CD4-positive, alpha-beta T cell (primary cell): ENCODE measurements at regions of chr14 and their contacts with region 1.

Region 1: GRCh38 chr14:100067971-100068959 is 3.0 kb downstream of the EVL start:
- DNase-seq: peak; percentile 68 to 97 (median 82)
- ATAC-seq: peak; percentile 49
- H3K4me3 ChIP-seq: peak overlapping the region; percentile 77
- H3K4me3 Mint-ChIP-seq: peak overlapping the region; percentile 95
- H3K27ac ChIP-seq: peak overlapping the region; percentile 82 to 96
- H3K27ac Mint-ChIP-seq: peak overlapping the region; percentile 98
- H3K4me1 ChIP-seq: peaks cover 67% of the 10 kb centered on the region
- H3K4me1 Mint-ChIP-seq: peaks cover 85% of the 10 kb centered on the region
- H3K27me3 ChIP-seq: no peaks in the 10 kb centered on the region
- H3K27me3 Mint-ChIP-seq: no peaks in the 10 kb centered on the region
- CTCF ChIP-seq: no peak

Region 2: DNA sequence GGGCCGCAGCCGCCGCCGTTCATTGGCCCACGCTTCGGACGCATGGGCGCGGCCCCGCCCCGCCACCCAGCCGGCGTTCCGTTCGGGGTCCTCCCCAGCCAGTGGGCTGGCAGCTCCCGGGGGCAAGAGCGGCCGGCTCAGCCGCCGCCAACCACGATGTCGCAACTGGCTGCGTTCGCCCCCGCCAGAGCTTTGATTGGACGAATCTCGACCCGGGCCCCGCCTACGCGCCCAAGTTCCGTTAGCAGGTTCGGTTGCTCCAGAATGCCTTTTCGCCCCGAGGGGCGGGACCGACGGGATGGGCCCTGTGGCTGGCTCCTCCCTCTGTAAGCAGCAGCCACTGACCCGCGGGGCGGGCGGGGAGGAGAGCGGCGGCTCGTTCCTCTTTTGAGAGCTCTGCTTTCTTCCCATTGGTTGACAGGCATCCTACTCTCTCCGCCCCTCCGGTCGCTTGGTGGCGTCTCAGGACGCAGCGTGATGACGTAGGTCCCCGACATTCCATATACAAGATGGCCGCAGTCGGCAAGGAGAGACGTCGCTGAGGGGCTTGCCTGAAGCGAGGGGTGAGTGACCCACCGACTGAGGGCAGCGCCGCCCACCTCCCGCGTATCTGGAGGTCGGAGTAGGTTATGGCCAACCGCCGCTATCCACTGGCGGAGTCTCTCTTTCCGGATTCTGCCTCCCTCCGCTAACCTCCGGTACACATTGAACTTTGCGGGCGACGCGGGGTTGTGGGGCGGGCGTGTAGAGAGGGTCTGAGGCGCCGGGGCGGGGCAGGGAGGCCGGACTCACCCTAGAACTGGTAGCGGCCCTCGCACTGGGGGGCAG is 587.1 kb before region 1 on chr14 and contains the start of gene CCNK:
- CTCF ChIA-PET with region 1: no interaction called
- POLR2A ChIA-PET with region 1: interaction called, 12 read pairs
- intact Hi-C with region 1: no loop called
- DNase-seq: peak; percentile 100
- ATAC-seq: peak; percentile 87
- H3K4me3 ChIP-seq: peak within 1 kb of the TSS; percentile 96
- H3K4me3 Mint-ChIP-seq: peak within 1 kb of the TSS; percentile 92
- H3K27ac ChIP-seq: peak within 1 kb of the TSS; percentile 90 to 96
- H3K27ac Mint-ChIP-seq: peak within 1 kb of the TSS; percentile 94
- H3K4me1 ChIP-seq: peaks cover 29% of the 10 kb centered on the region
- H3K4me1 Mint-ChIP-seq: peaks cover 74% of the 10 kb centered on the region
- H3K27me3 ChIP-seq: no peaks in the 10 kb centered on the region
- H3K27me3 Mint-ChIP-seq: no peaks in the 10 kb centered on the region
- CTCF ChIP-seq: no peak
- total RNA-seq, gene CCNK: 140 to 151 TPM

Region 3: DNA sequence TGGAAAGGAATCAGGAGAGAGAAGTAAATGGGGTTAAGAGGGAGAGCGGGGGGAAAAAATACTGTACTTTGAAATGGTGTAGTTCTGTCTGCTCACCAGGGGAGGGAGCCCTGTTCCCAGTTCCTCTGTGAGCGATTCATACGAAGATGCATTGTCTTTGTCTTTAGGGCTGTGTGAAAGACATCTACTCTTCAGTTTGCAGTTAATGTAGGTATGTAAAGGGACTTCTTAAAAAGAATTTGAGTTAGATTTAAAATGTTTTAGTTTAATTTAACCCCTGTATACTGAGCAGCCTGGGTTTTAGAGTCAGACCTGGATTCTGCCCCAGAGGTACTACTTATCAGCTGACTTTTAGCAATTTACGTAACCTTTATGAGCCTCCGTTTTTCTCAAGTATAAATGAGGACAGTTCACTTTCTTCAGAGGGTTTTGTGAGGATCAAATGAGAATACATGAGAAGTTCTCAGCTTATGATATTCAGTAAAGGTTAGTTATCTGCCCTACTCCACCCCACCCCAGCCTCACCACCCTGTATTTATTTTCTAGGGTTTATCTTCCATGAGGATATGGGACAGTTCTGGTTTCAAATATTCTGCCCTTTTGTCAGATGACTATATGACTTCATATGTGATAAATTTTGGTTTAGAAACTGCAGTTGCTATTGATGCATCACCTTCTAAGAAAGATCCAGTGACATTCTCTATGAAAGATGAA is 85.6 kb before region 1 on chr14:
- CTCF ChIA-PET with region 1: interaction called, 6 read pairs
- POLR2A ChIA-PET with region 1: interaction called, 4 read pairs
- intact Hi-C with region 1: loop called in 1 of 2 experiments (anchors 2 kb)
- DNase-seq: peak; percentile 33 to 86 (median 60)
- ATAC-seq: peak; percentile 100
- H3K4me3 ChIP-seq: no peak overlapping the region
- H3K4me3 Mint-ChIP-seq: no peak overlapping the region
- H3K27ac ChIP-seq: no peak overlapping the region
- H3K27ac Mint-ChIP-seq: peak overlapping the region; percentile 34
- H3K4me1 ChIP-seq: peaks cover 3% of the 10 kb centered on the region
- H3K4me1 Mint-ChIP-seq: peaks cover 23% of the 10 kb centered on the region
- H3K27me3 ChIP-seq: no peaks in the 10 kb centered on the region
- H3K27me3 Mint-ChIP-seq: no peaks in the 10 kb centered on the region
- CTCF ChIP-seq: peak; percentile 95

Region 4: GRCh38 chr14:100056964-100057795 is 11.1 kb before region 1 on chr14:
- CTCF ChIA-PET with region 1: interaction called, 28 read pairs
- POLR2A ChIA-PET with region 1: interaction called, 1,638 read pairs
- intact Hi-C with region 1: loop called (anchors 1 kb)
- DNase-seq: peak in 4 of 14 experiments; percentile 48 to 85 (median 78)
- ATAC-seq: peak; percentile 80
- H3K4me3 ChIP-seq: no peak overlapping the region
- H3K4me3 Mint-ChIP-seq: peak overlapping the region; percentile 8
- H3K27ac ChIP-seq: peak overlapping the region in 1 of 2 donors; percentile 39
- H3K27ac Mint-ChIP-seq: peak overlapping the region; percentile 78
- H3K4me1 ChIP-seq: peaks cover 48% of the 10 kb centered on the region
- H3K4me1 Mint-ChIP-seq: peaks cover 51% of the 10 kb centered on the region
- H3K27me3 ChIP-seq: no peaks in the 10 kb centered on the region
- H3K27me3 Mint-ChIP-seq: no peaks in the 10 kb centered on the region
- CTCF ChIP-seq: peak; percentile 81

Region 5: DNA sequence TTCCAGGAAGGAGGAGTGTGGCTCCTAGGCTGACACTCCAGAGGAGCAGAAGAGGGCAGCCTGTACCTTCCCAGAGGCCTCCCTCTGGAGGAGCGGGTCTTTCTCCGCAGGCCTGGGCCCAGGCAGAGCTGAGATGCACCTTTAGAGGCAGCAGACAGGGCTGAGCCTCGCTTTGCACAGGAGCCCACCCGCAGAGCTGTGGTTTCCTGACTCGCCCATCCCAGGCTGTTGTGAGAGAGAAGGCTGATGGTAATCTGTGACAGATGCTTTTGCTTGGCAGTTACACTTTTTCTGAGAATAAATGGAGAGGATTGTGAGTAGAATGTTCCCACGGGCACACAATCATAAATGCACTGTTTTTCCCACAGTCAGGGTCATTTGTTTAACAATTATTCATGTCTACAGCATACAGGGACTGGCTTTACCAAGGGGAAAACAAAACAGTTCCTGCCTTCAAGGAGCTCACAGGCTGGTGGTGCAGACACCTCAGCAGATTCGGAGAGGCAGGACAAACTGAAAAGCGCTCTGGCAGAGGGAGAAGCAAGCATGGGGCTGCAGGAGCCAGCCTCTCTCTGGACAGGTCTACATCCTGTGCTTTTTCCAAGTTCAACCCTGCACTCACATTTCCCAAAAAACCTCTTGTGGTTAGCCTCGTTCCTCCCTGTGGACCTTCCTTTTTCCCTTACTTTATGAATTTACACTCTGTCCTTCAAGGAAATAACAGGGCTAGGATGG is 10.9 kb after region 1 on chr14:
- CTCF ChIA-PET with region 1: interaction called, 1,090 read pairs
- POLR2A ChIA-PET with region 1: interaction called, 1,638 read pairs
- intact Hi-C with region 1: loop called (anchors 1 to 2 kb)
- DNase-seq: peak; percentile 73 to 94 (median 83)
- ATAC-seq: peak; percentile 69
- H3K4me3 ChIP-seq: peak overlapping the region; percentile 29
- H3K4me3 Mint-ChIP-seq: peak overlapping the region; percentile 88
- H3K27ac ChIP-seq: peak overlapping the region; percentile 53 to 96
- H3K27ac Mint-ChIP-seq: peak overlapping the region; percentile 98
- H3K4me1 ChIP-seq: peaks cover 95% of the 10 kb centered on the region
- H3K4me1 Mint-ChIP-seq: peaks cover 98% of the 10 kb centered on the region
- H3K27me3 ChIP-seq: no peaks in the 10 kb centered on the region
- H3K27me3 Mint-ChIP-seq: no peaks in the 10 kb centered on the region
- CTCF ChIP-seq: peak; percentile 28

Region 6: GRCh38 chr14:100108042-100108825 is 40.0 kb after region 1 on chr14:
- CTCF ChIA-PET with region 1: interaction called, 1,090 read pairs
- POLR2A ChIA-PET with region 1: interaction called, 1,638 read pairs
- intact Hi-C with region 1: loop called (anchors 1 kb)
- DNase-seq: peak; percentile 80 to 92 (median 86)
- ATAC-seq: peak; percentile 45
- H3K4me3 ChIP-seq: no peak overlapping the region
- H3K4me3 Mint-ChIP-seq: peak overlapping the region; percentile 69
- H3K27ac ChIP-seq: peak overlapping the region; percentile 49 to 85
- H3K27ac Mint-ChIP-seq: peak overlapping the region; percentile 98
- H3K4me1 ChIP-seq: peaks cover 87% of the 10 kb centered on the region
- H3K4me1 Mint-ChIP-seq: peaks cover 80% of the 10 kb centered on the region
- H3K27me3 ChIP-seq: no peaks in the 10 kb centered on the region
- H3K27me3 Mint-ChIP-seq: no peaks in the 10 kb centered on the region
- CTCF ChIP-seq: peak; percentile 93

Region 7: DNA sequence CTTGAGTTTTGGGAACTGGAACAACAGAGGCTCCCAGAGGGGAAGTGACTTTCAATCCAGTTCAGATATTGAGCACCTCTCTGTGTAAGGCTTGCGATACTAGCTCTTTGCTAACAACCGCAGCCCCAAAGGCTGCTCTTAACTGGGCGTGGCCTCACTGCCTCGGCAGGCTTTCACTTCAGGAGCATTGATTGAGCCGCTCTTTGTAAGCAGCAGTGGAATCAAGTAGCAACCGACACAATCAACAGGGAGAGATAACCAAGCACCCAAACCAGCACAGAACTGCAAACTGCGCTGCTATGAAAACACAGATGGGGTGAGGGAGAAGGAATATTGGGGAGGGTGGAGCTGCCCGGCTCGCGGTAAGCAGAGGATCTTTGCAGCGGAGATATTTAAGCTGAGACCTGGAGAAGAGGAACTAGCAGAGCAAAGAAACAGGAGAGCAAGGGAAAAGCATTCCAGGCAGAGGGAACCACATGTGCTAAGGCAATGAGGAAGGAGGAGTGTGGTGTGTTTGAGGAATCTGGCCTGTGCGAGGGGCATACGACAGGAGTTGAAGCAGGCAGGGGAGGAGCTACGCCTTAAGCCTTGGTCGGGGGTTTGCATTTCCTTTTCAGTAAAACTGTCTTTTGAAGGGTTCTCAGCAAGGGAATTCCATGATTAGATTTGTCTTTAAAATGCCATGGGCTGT is 153.4 kb after region 1 on chr14:
- CTCF ChIA-PET with region 1: no interaction called
- POLR2A ChIA-PET with region 1: interaction called, 64 read pairs
- intact Hi-C with region 1: no loop called
- DNase-seq: peak; percentile 52 to 87 (median 68)
- ATAC-seq: peak; percentile 94
- H3K4me3 ChIP-seq: peak overlapping the region; percentile 73
- H3K4me3 Mint-ChIP-seq: no peak overlapping the region
- H3K27ac ChIP-seq: peak overlapping the region; percentile 63 to 64
- H3K27ac Mint-ChIP-seq: no peak overlapping the region
- H3K4me1 ChIP-seq: peaks cover 59% of the 10 kb centered on the region
- H3K4me1 Mint-ChIP-seq: peaks cover 6% of the 10 kb centered on the region
- H3K27me3 ChIP-seq: no peaks in the 10 kb centered on the region
- H3K27me3 Mint-ChIP-seq: no peaks in the 10 kb centered on the region
- CTCF ChIP-seq: no peak